CD14-positive monocyte (primary cell): ENCODE measurements at regions of chr14 and their contacts with region 1.

Region 1: DNA sequence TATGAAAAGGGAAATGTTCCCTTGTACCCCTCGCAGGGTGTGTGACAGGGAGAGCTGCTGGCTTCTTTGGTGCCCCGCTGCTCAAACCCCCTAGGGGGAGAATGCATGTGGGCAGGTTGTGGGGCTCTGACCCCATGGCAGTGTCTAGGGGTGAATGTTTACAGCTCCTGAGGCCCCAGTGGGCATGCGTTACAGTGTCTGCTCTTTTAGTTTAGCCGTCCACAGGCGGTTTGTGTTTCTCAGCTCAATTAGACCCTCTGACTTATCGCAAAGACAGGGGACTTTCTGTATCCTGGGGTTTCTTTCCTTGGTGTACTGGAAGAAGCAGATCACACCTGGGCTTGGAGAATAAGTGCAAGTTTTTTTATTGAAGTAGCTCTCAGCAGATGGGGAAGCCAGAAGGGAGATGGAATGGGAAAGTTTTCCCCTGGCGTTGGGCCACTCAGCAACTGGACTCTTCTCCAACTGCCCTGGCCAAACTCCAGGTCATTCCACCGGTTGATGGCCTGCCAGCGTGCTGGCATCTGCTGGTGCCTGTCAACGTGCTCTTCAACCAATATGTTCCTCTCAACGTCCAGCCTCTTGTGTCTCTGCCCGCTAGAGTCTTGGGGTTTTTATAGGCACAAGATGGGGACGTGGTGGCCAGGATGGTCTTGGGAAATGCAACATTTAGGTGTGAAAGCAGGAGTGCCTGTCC is 720.9 kb downstream of the FSCB start:
- DNase-seq: no peak
- H3K4me3 ChIP-seq: no peak overlapping the region
- H3K4me3 Mint-ChIP-seq: no peak overlapping the region
- H3K27ac ChIP-seq: no peak overlapping the region
- H3K27ac Mint-ChIP-seq: no peak overlapping the region
- H3K4me1 ChIP-seq: no peaks in the 10 kb centered on the region
- H3K4me1 Mint-ChIP-seq: no peaks in the 10 kb centered on the region
- H3K27me3 ChIP-seq: no peaks in the 10 kb centered on the region
- H3K27me3 Mint-ChIP-seq: peaks cover 0 to 1% (median 0%) of the 10 kb centered on the region in 3 donors
- CTCF ChIP-seq: no peak

Region 2: DNA sequence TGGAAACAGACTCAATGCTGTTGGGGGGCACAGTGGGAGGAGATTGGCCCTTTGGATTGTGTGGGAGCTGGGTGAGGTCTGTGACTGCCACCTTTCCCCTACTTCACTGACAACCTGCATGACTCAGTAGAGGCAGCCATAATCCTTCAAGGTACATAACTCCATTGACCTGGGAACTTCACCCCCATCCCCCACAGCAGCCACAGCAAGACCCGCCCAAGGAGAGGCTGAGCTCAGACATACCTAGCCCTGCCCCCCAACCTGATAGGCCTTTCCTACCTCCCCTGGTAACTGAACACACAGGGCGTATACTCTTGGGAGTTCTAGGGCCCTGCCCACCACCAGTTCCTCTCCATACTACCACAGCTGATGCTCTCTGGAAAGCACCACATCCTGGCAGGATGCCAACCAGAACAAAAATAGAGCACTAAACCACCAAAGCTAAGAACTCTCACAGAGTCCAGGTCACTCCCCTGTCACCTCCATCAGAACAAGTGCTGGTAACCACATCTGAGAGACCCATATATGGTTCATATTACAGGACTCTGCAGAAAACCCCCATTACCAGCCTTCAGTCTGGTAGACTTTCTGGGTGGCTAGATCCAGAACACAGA is 17.0 kb after region 1 on chr14:
- intact Hi-C with region 1: loop called in 1 of 2 experiments (anchors 2 kb)
- DNase-seq: no peak
- H3K4me3 ChIP-seq: no peak overlapping the region
- H3K4me3 Mint-ChIP-seq: no peak overlapping the region
- H3K27ac ChIP-seq: no peak overlapping the region
- H3K27ac Mint-ChIP-seq: no peak overlapping the region
- H3K4me1 ChIP-seq: no peaks in the 10 kb centered on the region
- H3K4me1 Mint-ChIP-seq: no peaks in the 10 kb centered on the region
- H3K27me3 ChIP-seq: no peaks in the 10 kb centered on the region
- H3K27me3 Mint-ChIP-seq: peaks cover 0 to 2% (median 0%) of the 10 kb centered on the region in 3 donors
- CTCF ChIP-seq: no peak

Region 3: GRCh38 chr14:43938588-43939281 is 152.5 kb after region 1 on chr14:
- intact Hi-C with region 1: no loop called
- DNase-seq: no peak
- H3K4me3 ChIP-seq: no peak overlapping the region
- H3K4me3 Mint-ChIP-seq: no peak overlapping the region
- H3K27ac ChIP-seq: no peak overlapping the region
- H3K27ac Mint-ChIP-seq: no peak overlapping the region
- H3K4me1 ChIP-seq: no peaks in the 10 kb centered on the region
- H3K4me1 Mint-ChIP-seq: no peaks in the 10 kb centered on the region
- H3K27me3 ChIP-seq: no peaks in the 10 kb centered on the region
- H3K27me3 Mint-ChIP-seq: peaks cover 0 to 1% (median 0%) of the 10 kb centered on the region in 3 donors
- CTCF ChIP-seq: no peak